ENCODE measurements at regions of chr7 and their contacts with region 1.

Region 1: GRCh38 chr7:55132890-55133551 is 114.2 kb downstream of the EGFR start:
- DNase-seq: no peak
- ATAC-seq: peak in 6 of 8 donors; percentile 1 to 27 (median 21)
- H3K4me3 ChIP-seq: no peak overlapping the region
- H3K27ac ChIP-seq: peak overlapping the region; percentile 45 to 88 (median 78)
- H3K4me1 ChIP-seq: peaks cover 22 to 68% (median 57%) of the 10 kb centered on the region in 9 donors
- H3K27me3 ChIP-seq: no peaks in the 10 kb centered on the region
- CTCF ChIP-seq: no peak

Region 2: GRCh38 chr7:55026866-55027490 is 106.0 kb before region 1 on chr7:
- intact Hi-C with region 1: loop called in 3 of 10 experiments (anchors 5 to 10 kb)
- DNase-seq: no peak
- ATAC-seq: peak in 5 of 8 donors; percentile 26 to 74 (median 43)
- H3K4me3 ChIP-seq: no peak overlapping the region
- H3K27ac ChIP-seq: peak overlapping the region in 4 of 10 donors; percentile 6 to 17 (median 12)
- H3K4me1 ChIP-seq: peaks cover 0 to 36% (median 13%) of the 10 kb centered on the region in 9 donors
- H3K27me3 ChIP-seq: no peaks in the 10 kb centered on the region
- CTCF ChIP-seq: no peak

Region 3: DNA sequence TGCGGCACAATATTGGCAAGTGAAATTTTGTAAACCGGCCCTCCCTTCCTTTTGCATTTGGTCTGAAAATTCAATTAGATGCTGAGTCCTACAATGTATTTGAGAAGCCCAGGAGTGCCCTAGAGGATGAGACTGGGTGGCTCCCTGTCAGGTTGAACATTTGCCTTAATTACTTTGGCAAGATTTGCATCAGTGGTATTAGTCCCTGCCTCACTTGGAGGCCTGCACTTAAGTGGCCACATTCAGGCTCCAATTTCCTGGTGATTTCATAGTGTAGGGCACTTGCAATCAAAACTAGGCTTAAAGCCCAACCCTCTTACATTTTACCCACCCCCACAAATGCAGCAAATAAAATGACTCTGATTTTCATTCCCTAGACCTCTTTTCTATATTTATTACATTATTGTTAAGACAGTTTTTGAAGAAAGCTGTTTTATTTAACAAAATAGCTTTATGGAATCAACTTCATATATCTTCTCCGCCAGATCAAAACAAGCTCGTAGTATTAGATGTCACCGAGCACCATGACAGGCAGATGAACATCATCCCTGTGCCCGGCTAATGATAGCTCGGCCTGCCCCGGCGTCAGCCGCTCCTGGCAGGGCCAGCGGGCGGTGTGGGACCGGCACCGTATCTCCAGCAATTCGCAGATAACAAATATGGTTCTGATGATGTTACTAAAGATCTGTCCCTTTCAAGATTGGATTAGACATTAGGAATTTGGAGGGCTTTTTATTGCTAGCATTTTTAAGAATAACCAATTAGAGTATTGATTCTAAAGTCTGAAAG is 40.6 kb before region 1 on chr7:
- intact Hi-C with region 1: loop called in 2 of 10 experiments (anchors 5 kb)
- DNase-seq: no peak
- ATAC-seq: peak in 3 of 8 donors; percentile 6 to 28 (median 14)
- H3K4me3 ChIP-seq: no peak overlapping the region
- H3K27ac ChIP-seq: peak overlapping the region in 8 of 10 donors; percentile 4 to 49 (median 40)
- H3K4me1 ChIP-seq: peaks cover 4 to 68% (median 29%) of the 10 kb centered on the region in 9 donors
- H3K27me3 ChIP-seq: no peaks in the 10 kb centered on the region
- CTCF ChIP-seq: no peak

Region 4: GRCh38 chr7:55177589-55178261 is 44.7 kb after region 1 on chr7:
- intact Hi-C with region 1: loop called in 1 of 10 experiments (anchors 5 kb)
- DNase-seq: peak; percentile 49 to 66
- ATAC-seq: peak; percentile 58 to 86 (median 73)
- H3K4me3 ChIP-seq: no peak overlapping the region
- H3K27ac ChIP-seq: peak overlapping the region; percentile 7 to 80 (median 52)
- H3K4me1 ChIP-seq: peaks cover 0 to 37% (median 15%) of the 10 kb centered on the region in 9 donors
- H3K27me3 ChIP-seq: no peaks in the 10 kb centered on the region
- CTCF ChIP-seq: no peak

Region 5: GRCh38 chr7:55255496-55256435 is 122.7 kb after region 1 on chr7:
- intact Hi-C with region 1: loop called in 3 of 10 experiments (anchors 5 to 10 kb)
- DNase-seq: peak; percentile 71 to 85
- ATAC-seq: peak; percentile 92 to 96 (median 94)
- H3K4me3 ChIP-seq: peak overlapping the region; percentile 46 to 84 (median 60)
- H3K27ac ChIP-seq: peak overlapping the region in 5 of 10 donors; percentile 8 to 65 (median 34)
- H3K4me1 ChIP-seq: peaks cover 0 to 19% (median 11%) of the 10 kb centered on the region in 9 donors
- H3K27me3 ChIP-seq: peaks cover 6 to 55% (median 30%) of the 10 kb centered on the region in 7 donors
- CTCF ChIP-seq: peak; percentile 81 to 97 (median 92)

Region 6: GRCh38 chr7:55629051-55629677 is 496.1 kb after region 1 on chr7:
- intact Hi-C with region 1: no loop called
- DNase-seq: no peak
- ATAC-seq: no peak
- H3K4me3 ChIP-seq: no peak overlapping the region
- H3K27ac ChIP-seq: no peak overlapping the region
- H3K4me1 ChIP-seq: no peaks in the 10 kb centered on the region
- H3K27me3 ChIP-seq: peaks cover 0 to 18% (median 0%) of the 10 kb centered on the region in 7 donors
- CTCF ChIP-seq: no peak